SK-N-SH (cell line): ENCODE measurements at regions of chr5 and their contacts with region 1.

Region 1: GRCh38 chr5:155129513-155129880 is 115.9 kb downstream of the KIF4B start:
- DNase-seq: no peak
- H3K4me3 ChIP-seq: no peak overlapping the region
- H3K27ac ChIP-seq: no peak overlapping the region
- H3K4me1 ChIP-seq: peaks cover 0 to 3% of the 10 kb centered on the region in 2 experiments; a peak in 1 of 4 replicates
- H3K27me3 ChIP-seq: no peaks in the 10 kb centered on the region
- CTCF ChIP-seq: no peak
- EP300 ChIP-seq: no peak
- RAD21 ChIP-seq: no peak

Region 2: DNA sequence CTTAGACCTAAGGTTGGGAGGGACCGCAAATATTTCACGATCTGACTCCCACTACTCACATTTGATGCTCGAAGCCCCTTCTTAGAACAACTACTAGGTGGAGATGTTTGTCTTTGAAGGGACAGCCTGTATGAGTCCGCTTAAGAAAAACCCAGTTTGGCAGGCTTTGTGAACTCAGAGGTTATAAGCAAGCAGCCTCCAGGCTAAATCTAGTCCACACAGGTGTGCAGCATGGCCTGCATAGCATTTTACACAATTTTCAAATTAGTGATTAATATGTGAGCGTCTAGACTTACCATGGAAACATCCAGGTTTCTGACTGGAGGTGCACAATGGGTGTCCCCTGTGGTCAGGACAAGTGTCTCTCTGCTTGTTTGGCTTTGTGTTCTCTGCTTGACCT is 11.2 kb after region 1 on chr5:
- CTCF ChIA-PET with region 1: interaction called, 20 read pairs
- POLR2A ChIA-PET with region 1: no interaction called
- DNase-seq: no peak
- H3K4me3 ChIP-seq: no peak overlapping the region
- H3K27ac ChIP-seq: no peak overlapping the region
- H3K4me1 ChIP-seq: no peaks in the 10 kb centered on the region; a peak in 1 of 4 replicates
- H3K27me3 ChIP-seq: no peaks in the 10 kb centered on the region
- CTCF ChIP-seq: no peak
- EP300 ChIP-seq: no peak
- RAD21 ChIP-seq: no peak